Right ventricle myocardium superior (tissue), 1 donor: ENCODE measurements at regions of chr10 and their contacts with region 1.

Region 1: DNA sequence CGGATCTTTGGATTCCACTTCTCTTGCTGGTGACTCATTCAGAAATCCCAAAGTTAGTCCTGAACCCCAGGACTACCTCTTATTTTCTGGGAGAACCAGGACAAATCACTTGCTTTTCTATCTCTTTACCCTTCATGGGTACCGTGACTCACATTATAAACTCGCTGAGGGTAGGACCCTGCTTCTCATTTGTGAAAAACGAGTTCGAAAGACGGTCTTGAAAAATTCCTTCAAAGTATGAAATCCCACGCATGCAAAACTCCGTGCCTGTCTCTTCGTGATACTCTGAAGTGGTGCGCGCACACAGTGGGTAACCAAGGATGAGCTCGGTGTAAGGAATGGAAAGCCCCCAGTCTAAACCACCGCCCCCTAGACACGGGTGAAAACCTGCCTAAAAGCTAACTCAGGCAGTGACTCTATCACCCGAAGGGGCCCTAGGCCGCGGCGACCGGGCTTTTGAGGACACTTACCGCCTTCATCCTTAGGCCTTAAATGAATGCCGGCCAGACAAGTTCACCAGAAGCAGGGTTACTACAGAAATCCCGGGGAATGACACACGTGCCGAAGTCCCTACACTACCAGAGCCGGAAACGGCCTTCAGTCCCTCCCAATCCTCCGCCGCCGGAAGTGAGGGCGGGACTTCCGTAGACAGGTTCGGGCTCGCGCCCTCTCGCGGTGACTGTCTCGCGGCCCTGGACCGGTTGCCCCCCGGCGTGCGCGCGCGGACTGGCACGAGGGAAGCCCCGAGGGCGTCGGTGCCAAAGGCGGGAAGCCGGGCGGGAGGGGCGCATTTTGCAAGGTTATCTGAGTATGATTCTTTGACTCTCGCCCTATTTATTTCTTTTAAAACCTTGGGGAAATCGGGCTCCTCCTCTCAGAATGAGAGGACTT is at the start of gene NOC3L:
- DNase-seq: peak; percentile 98
- ATAC-seq: peak; percentile 100
- total RNA-seq, gene NOC3L: 9.3 TPM

Region 2: DNA sequence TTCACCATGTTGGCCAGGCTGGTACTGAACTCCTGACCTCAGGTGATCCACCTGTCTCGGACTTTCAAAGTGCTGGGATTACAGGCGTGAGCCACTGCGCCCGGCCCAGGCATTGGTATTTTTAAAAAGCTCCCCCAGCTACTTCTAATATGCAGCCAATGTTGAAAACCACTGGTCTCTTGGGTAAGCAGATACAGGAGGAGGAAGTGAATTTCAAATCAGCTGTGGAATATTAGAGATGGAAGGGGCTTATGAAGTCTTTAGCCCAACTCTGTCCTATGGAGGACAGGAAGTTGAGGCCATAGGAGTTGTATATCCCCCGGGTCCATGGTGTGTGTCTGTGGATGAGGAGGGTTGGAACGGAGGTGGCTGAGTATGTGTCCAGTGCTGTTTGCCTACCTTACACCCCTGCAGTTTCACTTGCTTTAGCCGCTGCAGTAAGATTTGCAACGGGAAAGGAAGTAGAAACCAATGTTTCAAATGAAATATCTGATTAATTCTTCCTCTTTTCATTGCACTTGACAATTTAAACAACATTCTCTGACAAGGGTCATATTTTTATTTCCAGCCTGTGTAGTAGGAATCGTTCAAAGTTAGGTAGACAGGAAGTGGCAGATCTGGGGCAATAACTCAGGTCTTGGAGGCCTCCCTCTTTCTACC is 746.9 kb before region 1 on chr10:
- intact Hi-C with region 1: no loop called
- DNase-seq: no peak
- ATAC-seq: no peak

Region 3: DNA sequence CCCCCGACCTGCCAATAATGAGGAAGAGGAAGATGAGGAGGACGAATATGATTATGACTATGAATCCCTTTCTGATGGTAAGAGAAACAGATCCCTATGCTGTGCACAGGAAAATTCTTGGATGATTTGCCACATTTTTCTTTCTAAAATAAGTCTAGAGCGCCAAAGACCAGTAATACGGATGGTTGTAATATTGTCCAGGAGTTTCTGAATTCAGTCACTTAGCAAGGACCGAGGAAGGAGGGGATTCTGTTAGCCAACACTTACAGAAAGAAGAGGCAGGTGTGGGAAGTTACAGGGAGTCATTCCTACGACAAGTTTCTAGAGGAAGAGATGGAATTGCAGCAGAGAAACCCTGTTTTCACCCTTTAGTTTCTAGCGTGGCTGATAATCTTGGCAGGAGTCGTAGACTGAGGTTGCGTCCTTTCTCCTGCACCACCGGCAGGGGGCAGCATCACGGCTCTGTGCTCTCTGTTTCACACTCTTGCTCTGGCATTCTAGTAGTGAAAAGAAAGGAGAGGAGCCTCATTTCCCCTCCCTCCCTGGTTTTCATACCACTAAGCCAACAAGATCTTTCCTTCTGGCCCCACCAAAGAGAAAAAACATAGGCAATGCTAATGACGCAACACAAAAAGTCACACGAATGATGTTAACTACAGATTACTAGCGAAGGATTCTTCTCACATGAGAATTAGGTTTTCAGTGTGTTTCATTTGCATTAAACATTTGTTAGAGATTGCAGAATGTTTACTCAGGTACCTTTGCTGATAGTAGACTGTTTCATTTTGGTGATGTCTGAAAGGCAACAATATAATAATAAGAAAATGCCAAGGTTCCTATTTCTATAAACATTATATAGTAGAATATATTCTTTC is 82.5 kb before region 1 on chr10:
- intact Hi-C with region 1: no loop called
- DNase-seq: peak; percentile 53
- ATAC-seq: peak; percentile 84

Region 4: DNA sequence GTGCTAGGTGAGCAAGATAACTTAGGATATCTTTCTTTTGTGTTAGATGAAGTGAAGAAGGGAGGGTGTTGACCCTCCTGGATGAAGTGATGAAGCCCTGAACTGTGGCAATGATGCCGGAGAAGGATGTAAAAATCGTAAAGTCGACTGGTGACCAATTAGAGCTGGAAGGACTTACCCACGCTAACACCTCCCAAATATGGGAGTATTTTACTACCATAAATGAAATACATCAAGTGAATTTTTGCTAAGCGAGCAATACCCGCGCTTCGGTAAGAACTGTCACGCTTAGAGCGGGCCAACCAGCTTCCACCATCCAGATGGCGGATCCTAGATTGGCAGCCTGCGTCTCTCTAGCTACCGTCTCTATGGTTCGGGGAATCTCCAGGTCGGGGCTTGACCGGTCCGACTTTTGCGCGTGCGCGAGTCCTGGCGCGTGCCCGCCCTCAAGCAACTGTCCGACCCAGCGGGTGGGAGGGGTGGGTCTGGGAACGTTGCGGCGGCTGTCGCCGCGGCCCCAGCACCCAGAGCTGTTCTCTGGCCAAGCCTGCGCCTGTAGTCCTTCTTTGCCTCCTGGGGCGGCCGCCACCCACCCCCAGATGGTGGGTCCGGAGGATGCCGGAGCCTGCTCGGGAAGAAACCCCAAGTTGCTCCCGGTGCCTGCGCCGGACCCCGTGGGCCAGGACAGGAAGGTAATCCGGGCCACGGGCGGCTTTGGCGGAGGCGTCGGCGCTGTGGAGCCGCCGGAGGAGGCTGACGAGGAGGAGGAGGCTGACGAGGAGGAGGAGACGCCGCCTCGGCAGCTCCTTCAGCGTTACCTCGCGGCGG is 39.6 kb after region 1 on chr10 and contains the start of gene TBC1D12:
- intact Hi-C with region 1: loop called (anchors 5 kb)
- DNase-seq: peak; percentile 97
- ATAC-seq: peak; percentile 98
- total RNA-seq, gene TBC1D12: 4.4 TPM

Region 5: DNA sequence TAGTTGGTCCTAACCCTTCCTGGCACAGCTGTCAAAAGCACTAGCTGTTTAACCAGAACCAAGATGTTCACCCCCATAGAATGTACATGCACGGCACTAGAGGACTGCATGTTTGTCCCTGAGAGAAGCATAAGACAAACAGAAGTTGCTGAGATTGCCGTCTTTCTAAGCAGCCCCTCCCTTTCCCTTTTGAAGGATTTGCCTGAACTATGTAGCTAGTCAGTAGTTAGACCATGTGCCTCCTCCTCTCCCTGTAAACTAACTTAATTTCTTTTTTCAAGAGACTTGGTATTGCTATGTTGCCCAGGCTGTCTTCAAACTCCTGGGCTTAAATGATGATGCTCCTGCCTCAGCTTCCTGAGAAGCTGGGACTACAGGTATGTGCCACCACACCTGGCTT is 80.4 kb after region 1 on chr10:
- intact Hi-C with region 1: loop called (anchors 5 kb)
- DNase-seq: no peak
- ATAC-seq: peak; percentile 25